ENCODE measurements at regions of chr18 and their contacts with region 1.

Region 1: DNA sequence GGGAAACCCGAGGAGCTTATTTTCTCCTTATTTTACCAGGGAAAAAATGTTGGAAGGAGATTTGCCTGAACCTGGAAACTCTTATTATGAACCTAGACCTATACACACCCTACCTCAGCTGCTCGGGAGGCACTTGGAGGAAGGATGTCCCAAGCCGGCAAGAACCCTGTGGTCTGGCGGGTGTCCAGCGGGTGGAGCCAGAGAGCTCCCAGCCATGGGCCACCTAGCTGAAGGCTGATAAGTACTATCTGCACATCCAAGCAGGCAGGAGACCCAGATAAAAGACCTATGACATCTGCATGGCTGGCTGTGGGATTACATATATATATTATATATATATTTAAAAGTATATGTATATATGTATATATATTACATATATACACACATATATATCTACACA is 1.1 kb upstream of the SLC14A1 start:
- DNase-seq: peak; percentile 80
- H3K4me3 Mint-ChIP-seq: no peak overlapping the region
- H3K27ac Mint-ChIP-seq: no peak overlapping the region
- H3K4me1 Mint-ChIP-seq: no peaks in the 10 kb centered on the region
- H3K27me3 Mint-ChIP-seq: peaks cover 11% of the 10 kb centered on the region
- CTCF ChIP-seq: peak; percentile 83

Region 2: DNA sequence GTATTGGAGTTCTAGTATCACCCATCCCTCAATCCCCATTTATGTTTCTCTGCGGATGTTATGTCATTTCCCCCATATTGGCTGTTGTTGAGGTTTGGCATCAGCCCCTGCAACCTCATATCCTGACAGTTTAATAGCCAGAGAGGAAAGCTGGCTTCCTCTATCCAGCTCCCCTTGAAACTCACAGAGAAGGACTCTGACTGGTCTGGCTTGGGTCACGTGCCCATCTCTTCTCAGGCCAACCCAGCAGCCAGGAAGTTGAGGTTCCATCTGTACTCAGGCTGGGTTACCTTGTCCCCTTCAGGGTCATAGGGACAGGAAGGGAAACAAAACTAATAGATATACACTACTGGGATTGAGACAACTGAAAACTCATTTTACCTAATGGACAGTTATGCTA is 255.6 kb before region 1 on chr18:
- CTCF ChIA-PET with region 1: no interaction called
- POLR2A ChIA-PET with region 1: no interaction called
- intact Hi-C with region 1: no loop called
- DNase-seq: no peak
- H3K4me3 Mint-ChIP-seq: no peak overlapping the region
- H3K27ac Mint-ChIP-seq: no peak overlapping the region
- H3K4me1 Mint-ChIP-seq: no peaks in the 10 kb centered on the region
- H3K27me3 Mint-ChIP-seq: no peaks in the 10 kb centered on the region
- CTCF ChIP-seq: no peak

Region 3: DNA sequence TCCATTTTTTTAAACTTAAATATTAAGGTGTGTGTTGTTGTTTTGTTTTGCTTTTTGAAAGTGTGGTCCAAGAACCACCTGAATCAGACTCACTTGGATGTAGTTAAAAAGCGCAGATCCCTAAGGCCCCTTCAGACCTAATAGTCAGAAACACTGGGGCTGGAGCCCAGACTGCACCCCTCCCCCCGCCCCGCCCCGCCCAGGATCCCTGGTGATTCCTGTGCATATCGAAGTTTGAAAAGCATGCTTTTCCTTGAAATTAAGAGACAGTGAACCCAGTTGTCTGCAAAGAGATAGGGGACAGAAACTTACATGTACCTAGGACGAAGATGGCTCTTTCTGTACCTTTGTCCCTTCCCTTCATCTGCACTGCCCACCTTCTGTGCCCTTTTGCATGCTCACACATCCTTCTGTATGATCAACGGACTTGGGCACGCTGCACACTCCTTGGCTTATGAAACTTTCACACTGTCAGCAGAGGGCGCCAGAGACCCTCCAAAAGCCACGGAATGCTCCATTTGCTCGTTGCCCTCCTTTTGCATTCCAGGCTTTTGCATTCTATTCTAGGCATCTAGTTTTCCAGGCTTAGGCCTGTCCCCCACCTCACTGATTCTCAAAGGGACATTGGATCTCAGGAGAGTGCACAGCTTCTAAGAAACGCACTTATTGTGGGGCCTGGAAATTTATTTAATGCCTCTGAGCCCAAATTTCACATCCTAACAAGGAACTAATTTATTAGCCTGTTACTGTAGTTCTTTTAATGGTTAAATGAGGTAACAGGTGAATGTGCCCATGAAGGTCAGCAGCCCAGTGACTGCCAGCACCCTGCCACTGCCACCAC is 31.7 kb before region 1 on chr18:
- CTCF ChIA-PET with region 1: interaction called, 11 read pairs
- POLR2A ChIA-PET with region 1: no interaction called
- intact Hi-C with region 1: loop called (anchors 1 kb)
- DNase-seq: peak; percentile 86
- H3K4me3 Mint-ChIP-seq: no peak overlapping the region
- H3K27ac Mint-ChIP-seq: no peak overlapping the region
- H3K4me1 Mint-ChIP-seq: peaks cover 10% of the 10 kb centered on the region
- H3K27me3 Mint-ChIP-seq: peaks cover 11% of the 10 kb centered on the region
- CTCF ChIP-seq: peak; percentile 90

Region 4: DNA sequence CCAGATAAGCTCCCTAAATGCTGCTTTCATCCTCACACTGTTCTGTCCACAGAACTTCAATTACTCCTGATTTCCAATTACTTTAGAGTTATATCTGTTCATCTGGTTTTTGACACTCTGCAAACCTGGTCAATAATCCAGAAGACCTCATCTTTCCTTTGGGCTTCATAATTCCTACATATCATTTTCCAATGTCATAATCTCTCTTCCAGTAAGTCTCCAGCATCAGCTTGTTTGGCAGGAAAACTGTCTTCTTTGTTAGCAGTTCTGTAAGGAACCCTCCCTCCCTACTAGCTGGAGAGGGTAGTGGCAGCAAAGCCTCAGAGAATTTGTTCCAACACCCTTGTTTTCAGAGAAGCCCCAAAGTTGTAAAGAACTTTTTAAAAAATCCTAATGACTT is 10.8 kb before region 1 on chr18:
- CTCF ChIA-PET with region 1: interaction called, 35 read pairs
- POLR2A ChIA-PET with region 1: no interaction called
- intact Hi-C with region 1: no loop called
- DNase-seq: no peak
- H3K4me3 Mint-ChIP-seq: no peak overlapping the region
- H3K27ac Mint-ChIP-seq: no peak overlapping the region
- H3K4me1 Mint-ChIP-seq: no peaks in the 10 kb centered on the region
- H3K27me3 Mint-ChIP-seq: peaks cover 11% of the 10 kb centered on the region
- CTCF ChIP-seq: no peak

Measured in MCF 10A (cell line).